ENCODE measurements at regions of chr17 and their contacts with region 1.

Region 1: GRCh38 chr17:7561028-7561575 is 617 bp upstream of the SENP3 start:
- H3K4me3 ChIP-seq: peak overlapping the region; percentile 85
- H3K27ac ChIP-seq: peak overlapping the region; percentile 93
- H3K4me1 ChIP-seq: peaks cover 11% of the 10 kb centered on the region
- CTCF ChIP-seq: peak; percentile 90

Region 2: GRCh38 chr17:6800422-6801027 is 760.6 kb before region 1 on chr17:
- CTCF ChIA-PET with region 1: no interaction called
- POLR2A ChIA-PET with region 1: no interaction called
- H3K4me3 ChIP-seq: no peak overlapping the region
- H3K27ac ChIP-seq: no peak overlapping the region
- H3K4me1 ChIP-seq: no peaks in the 10 kb centered on the region
- CTCF ChIP-seq: no peak

Region 3: GRCh38 chr17:7351665-7352501 is 209.2 kb before region 1 on chr17 and contains the start of gene KCTD11:
- CTCF ChIA-PET with region 1: interaction called, 87 read pairs
- POLR2A ChIA-PET with region 1: interaction called, 8 read pairs
- H3K4me3 ChIP-seq: peak within 1 kb of the TSS; percentile 70
- H3K27ac ChIP-seq: peak within 1 kb of the TSS; percentile 90
- H3K4me1 ChIP-seq: peaks cover 14% of the 10 kb centered on the region
- CTCF ChIP-seq: peak; percentile 85

Region 4: GRCh38 chr17:7435221-7435675 is 125.9 kb before region 1 on chr17 and contains the start of gene TMEM102:
- CTCF ChIA-PET with region 1: interaction called, 15 read pairs
- POLR2A ChIA-PET with region 1: interaction called, 5 read pairs
- H3K4me3 ChIP-seq: peak within 1 kb of the TSS; percentile 50
- H3K27ac ChIP-seq: peak within 1 kb of the TSS; percentile 19; the same call in 1 of the 2 replicates
- H3K4me1 ChIP-seq: peaks cover 13% of the 10 kb centered on the region
- CTCF ChIP-seq: no peak

Region 5: DNA sequence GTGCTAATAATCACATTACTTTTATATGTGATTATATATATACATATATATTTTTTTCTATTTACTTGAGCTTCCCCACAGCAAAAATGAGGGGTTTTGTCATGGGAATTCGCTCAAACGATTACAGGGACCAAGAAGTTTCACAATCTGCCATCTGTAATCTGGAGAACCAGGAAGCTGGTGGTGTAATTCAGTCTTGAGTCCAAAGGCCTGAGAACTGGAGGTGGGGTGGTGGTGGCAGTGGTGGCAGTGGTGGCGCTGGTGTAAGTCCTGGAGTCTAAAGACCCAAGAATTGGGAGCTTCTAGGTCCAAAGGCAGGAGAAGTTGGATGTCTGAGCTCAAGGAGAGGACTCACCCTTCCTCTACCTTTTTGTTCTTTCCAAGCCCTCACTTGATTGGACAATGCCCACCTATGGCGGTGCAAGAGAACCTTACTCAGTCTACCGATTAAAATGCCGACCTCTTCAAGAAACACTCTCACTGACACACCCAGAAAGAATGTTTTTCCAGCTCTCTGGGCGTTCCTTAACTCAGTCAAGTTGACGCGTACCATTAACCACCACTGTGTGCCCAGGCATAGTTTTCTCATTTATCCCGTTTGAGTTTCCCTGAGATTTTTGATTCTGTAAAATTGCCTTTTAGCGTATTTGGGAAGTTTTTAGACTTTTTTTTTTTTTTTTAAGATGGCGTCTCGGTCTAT is 45.0 kb before region 1 on chr17:
- CTCF ChIA-PET with region 1: interaction called, 112 read pairs
- POLR2A ChIA-PET with region 1: interaction called, 7 read pairs
- H3K4me3 ChIP-seq: no peak overlapping the region
- H3K27ac ChIP-seq: no peak overlapping the region
- H3K4me1 ChIP-seq: no peaks in the 10 kb centered on the region
- CTCF ChIP-seq: no peak

Region 6: GRCh38 chr17:7548585-7549400 is 12.3 kb before region 1 on chr17 and contains the start of gene TNFSF12:
- CTCF ChIA-PET with region 1: interaction called, 60 read pairs
- POLR2A ChIA-PET with region 1: interaction called, 6 read pairs
- H3K4me3 ChIP-seq: peak within 1 kb of the TSS; percentile 52
- H3K27ac ChIP-seq: no peak within 1 kb of the TSS; the same call in 1 of the 2 replicates
- H3K4me1 ChIP-seq: peaks cover 3% of the 10 kb centered on the region; the same call in 1 of the 2 replicates
- CTCF ChIP-seq: peak; percentile 58; the same call in 1 of the 2 replicates

Measured in HEK293 (cell line).